Endothelial cell of umbilical vein (primary cell): ENCODE measurements at regions of chr6 and their contacts with region 1.

Region 1: GRCh38 chr6:44475779-44476434 is 88.4 kb downstream of the CDC5L start:
- DNase-seq: peak; percentile 75
- H3K4me3 ChIP-seq: no peak overlapping the region
- H3K27ac ChIP-seq: no peak overlapping the region
- H3K4me1 ChIP-seq: no peaks in the 10 kb centered on the region
- H3K27me3 ChIP-seq: peaks cover 0 to 6% of the 10 kb centered on the region in 2 experiments
- CTCF ChIP-seq: peak; percentile 90 to 97
- POLR2A ChIP-seq: no peak

Region 2: DNA sequence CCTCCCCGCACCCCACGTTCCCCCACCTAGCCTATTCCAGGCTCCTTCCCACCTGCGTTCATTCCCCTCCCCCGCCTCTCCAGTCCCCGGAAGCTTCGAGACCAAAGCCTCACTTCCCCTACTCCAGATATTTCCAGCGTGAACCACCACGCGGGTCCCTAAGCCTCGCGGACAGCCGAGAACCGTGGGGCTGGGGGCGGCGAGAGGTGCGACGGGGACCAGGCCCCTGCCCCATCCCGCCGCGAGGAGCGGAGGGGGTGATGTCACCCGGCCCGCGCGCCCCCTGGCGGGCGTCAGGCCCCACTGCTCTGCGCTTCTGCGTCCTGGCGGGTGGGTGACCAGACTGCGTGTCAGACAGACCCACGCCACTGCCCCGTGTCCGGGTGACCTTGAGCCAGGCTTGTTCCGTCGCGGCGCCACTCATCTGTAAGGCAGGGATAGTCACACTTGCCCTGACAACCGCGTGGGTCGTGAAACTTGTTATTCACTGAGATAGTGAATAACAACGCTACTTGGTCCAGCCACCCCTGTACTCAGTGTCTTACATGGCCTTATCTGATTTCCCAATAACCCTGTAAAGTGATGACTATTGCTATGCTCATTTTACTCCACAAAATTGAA is 238.0 kb before region 1 on chr6:
- CTCF ChIA-PET with region 1: no interaction called
- POLR2A ChIA-PET with region 1: no interaction called
- dilution Hi-C with region 1: no loop called
- intact Hi-C with region 1: no loop called
- DNase-seq: peak; percentile 67
- H3K4me3 ChIP-seq: peak overlapping the region in 1 of 3 experiments; percentile 35
- H3K27ac ChIP-seq: peak overlapping the region; percentile 70
- H3K4me1 ChIP-seq: peaks cover 41% of the 10 kb centered on the region
- H3K27me3 ChIP-seq: no peaks in the 10 kb centered on the region
- CTCF ChIP-seq: peak; percentile 99
- POLR2A ChIP-seq: peak; percentile 13

Region 3: GRCh38 chr6:44456070-44456965 is 19.6 kb before region 1 on chr6:
- CTCF ChIA-PET with region 1: interaction called, 10 read pairs
- POLR2A ChIA-PET with region 1: no interaction called
- dilution Hi-C with region 1: no loop called
- intact Hi-C with region 1: no loop called
- DNase-seq: peak; percentile 63
- H3K4me3 ChIP-seq: peak overlapping the region in 2 of 3 experiments; percentile 19 to 50
- H3K27ac ChIP-seq: peak overlapping the region; percentile 8
- H3K4me1 ChIP-seq: peaks cover 23% of the 10 kb centered on the region
- H3K27me3 ChIP-seq: peaks cover 0 to 3% of the 10 kb centered on the region in 2 experiments
- CTCF ChIP-seq: peak; percentile 74 to 81
- POLR2A ChIP-seq: no peak

Region 4: GRCh38 chr6:44522871-44523270 is 47.0 kb after region 1 on chr6:
- CTCF ChIA-PET with region 1: interaction called, 10 read pairs
- POLR2A ChIA-PET with region 1: no interaction called
- dilution Hi-C with region 1: no loop called
- intact Hi-C with region 1: no loop called
- DNase-seq: no peak
- H3K4me3 ChIP-seq: no peak overlapping the region
- H3K27ac ChIP-seq: no peak overlapping the region
- H3K4me1 ChIP-seq: no peaks in the 10 kb centered on the region
- H3K27me3 ChIP-seq: peaks cover 0 to 7% of the 10 kb centered on the region in 2 experiments
- CTCF ChIP-seq: no peak
- POLR2A ChIP-seq: no peak

Region 5: DNA sequence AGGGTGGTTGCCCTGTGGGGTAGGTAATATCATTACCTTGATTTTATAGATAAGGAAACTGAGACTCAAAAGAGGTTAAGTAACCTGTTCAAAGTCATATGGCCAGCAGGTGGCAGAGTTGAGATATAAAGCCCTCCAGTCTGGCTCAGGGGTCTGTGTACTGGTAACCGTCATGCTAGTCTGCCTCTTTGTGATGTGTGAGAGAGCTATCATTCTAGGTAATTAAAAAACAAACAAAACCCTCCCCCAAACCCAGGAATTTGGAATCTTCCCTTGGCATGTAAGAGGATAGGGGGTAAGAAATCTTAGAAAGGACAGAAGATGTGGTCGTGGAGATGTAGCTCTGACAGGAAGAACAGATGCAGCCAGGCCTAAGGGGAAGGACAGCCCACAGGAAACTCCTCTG is 117.6 kb after region 1 on chr6:
- CTCF ChIA-PET with region 1: interaction called, 107 read pairs
- POLR2A ChIA-PET with region 1: no interaction called
- dilution Hi-C with region 1: no loop called
- intact Hi-C with region 1: loop called (anchors 1 kb)
- DNase-seq: peak; percentile 54
- H3K4me3 ChIP-seq: no peak overlapping the region
- H3K27ac ChIP-seq: no peak overlapping the region
- H3K4me1 ChIP-seq: no peaks in the 10 kb centered on the region
- H3K27me3 ChIP-seq: peaks cover 0 to 3% of the 10 kb centered on the region in 2 experiments
- CTCF ChIP-seq: peak; percentile 47 to 54
- POLR2A ChIP-seq: no peak

Region 6: GRCh38 chr6:44636561-44637248 is 160.8 kb after region 1 on chr6:
- CTCF ChIA-PET with region 1: interaction called, 81 read pairs
- POLR2A ChIA-PET with region 1: no interaction called
- dilution Hi-C with region 1: no loop called
- intact Hi-C with region 1: no loop called
- DNase-seq: no peak
- H3K4me3 ChIP-seq: no peak overlapping the region
- H3K27ac ChIP-seq: no peak overlapping the region
- H3K4me1 ChIP-seq: no peaks in the 10 kb centered on the region
- H3K27me3 ChIP-seq: peaks cover 0 to 3% of the 10 kb centered on the region in 2 experiments
- CTCF ChIP-seq: no peak
- POLR2A ChIP-seq: no peak

Region 7: GRCh38 chr6:45421709-45422502 is 946.0 kb after region 1 on chr6:
- CTCF ChIA-PET with region 1: interaction called, 8 read pairs
- POLR2A ChIA-PET with region 1: no interaction called
- dilution Hi-C with region 1: no loop called
- intact Hi-C with region 1: loop called (anchors 5 kb)
- DNase-seq: peak; percentile 48
- H3K4me3 ChIP-seq: peak overlapping the region; percentile 24 to 44 (median 34)
- H3K27ac ChIP-seq: no peak overlapping the region
- H3K4me1 ChIP-seq: peaks cover 17% of the 10 kb centered on the region
- H3K27me3 ChIP-seq: peaks cover 63 to 96% of the 10 kb centered on the region in 2 experiments
- CTCF ChIP-seq: peak in 1 of 2 donors; percentile 28
- POLR2A ChIP-seq: no peak